Breast epithelium (tissue), 4 donors: ENCODE measurements at regions of chr10 and their contacts with region 1.

Region 1: DNA sequence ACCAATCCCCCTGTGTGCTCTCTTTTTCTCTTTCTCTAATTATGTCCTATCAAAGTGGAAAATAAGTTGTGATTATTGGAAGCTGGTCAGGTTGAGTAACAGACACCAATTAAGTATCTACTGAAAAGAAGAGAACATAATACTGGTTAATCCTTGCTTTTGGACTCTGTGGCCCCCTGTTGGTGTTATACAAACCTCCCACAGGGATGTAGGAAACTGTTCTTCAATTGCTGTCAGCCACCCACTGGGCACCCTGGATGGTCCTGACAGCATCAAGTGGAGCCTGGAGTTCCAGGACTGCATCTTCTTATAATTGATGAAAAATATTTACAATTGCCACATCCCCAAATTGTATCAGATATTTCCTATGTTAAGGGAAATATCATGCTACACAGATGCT is 939.7 kb downstream of the KCNMA1 start:
- DNase-seq: no peak
- H3K4me3 ChIP-seq: no peak overlapping the region
- H3K27ac ChIP-seq: no peak overlapping the region
- H3K4me1 ChIP-seq: no peaks in the 10 kb centered on the region
- H3K27me3 ChIP-seq: no peaks in the 10 kb centered on the region
- CTCF ChIP-seq: no peak
- POLR2A ChIP-seq: no peak

Region 2: DNA sequence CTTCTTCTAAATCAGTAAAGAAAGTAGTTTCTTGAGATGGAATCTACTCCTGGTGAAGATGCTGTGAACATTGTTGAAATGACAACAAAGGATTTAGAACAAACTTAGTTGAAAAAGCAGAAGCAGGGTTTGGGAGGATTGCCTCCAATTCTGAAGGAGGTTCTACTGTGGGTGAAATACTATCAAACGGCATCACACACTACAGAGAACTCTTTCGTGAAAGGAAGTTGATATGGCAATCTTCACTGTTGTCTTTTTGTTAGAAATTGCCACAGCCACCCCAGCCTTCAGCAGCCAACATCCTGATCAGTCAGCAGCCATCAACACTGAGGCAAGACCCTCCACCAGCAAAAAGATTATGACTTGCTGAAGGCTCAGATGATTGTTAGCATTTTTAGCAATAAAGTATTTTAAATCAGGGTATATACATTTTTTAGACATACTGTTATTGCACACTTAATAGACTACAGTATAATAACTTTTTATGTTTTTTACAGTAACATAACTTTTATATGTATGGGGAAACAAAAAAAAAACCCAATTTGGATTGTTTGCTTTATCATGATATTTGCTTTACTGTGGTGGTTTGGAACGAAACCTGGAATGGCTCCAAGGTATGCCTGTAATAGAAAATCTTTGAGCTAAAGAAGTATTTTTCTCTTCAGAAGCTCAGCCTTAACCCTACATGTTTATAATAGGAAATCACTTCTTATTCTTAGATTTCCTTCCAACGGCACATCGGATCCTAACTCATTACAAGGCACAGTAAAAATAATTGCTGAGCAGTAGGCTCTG is 1009.2 kb before region 1 on chr10:
- intact Hi-C with region 1: loop called (anchors 5 kb)
- DNase-seq: no peak
- H3K4me3 ChIP-seq: no peak overlapping the region
- H3K27ac ChIP-seq: no peak overlapping the region
- H3K4me1 ChIP-seq: no peaks in the 10 kb centered on the region
- H3K27me3 ChIP-seq: no peaks in the 10 kb centered on the region
- CTCF ChIP-seq: no peak
- POLR2A ChIP-seq: no peak

Region 3: GRCh38 chr10:76711222-76711997 is 13.5 kb after region 1 on chr10:
- intact Hi-C with region 1: no loop called
- DNase-seq: no peak
- H3K4me3 ChIP-seq: no peak overlapping the region
- H3K27ac ChIP-seq: no peak overlapping the region
- H3K4me1 ChIP-seq: no peaks in the 10 kb centered on the region
- H3K27me3 ChIP-seq: no peaks in the 10 kb centered on the region
- CTCF ChIP-seq: no peak
- POLR2A ChIP-seq: no peak

Region 4: GRCh38 chr10:76778914-76779795 is 81.2 kb after region 1 on chr10:
- intact Hi-C with region 1: no loop called
- DNase-seq: no peak
- H3K4me3 ChIP-seq: no peak overlapping the region
- H3K27ac ChIP-seq: no peak overlapping the region
- H3K4me1 ChIP-seq: no peaks in the 10 kb centered on the region
- H3K27me3 ChIP-seq: no peaks in the 10 kb centered on the region
- CTCF ChIP-seq: no peak
- POLR2A ChIP-seq: no peak